ENCODE measurements at regions of chr2 and their contacts with region 1.

Region 1: DNA sequence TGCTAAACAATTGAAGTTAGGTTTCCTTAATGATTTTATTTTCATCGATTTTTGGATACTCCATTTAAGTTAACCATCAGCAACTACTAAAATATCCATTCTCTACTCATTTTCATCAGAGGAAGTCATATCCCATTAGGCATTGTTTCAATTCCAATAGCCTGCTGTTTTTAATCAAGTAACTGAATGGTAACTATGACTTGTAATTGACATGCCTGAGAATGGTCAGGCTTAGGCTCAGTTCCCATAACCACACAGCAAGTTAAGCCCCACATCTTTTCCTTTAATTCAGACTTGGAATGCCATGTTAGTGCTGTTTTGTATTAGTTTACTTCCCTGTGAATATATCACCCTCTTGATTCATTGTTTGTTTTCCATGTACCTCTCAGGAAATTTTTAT is 398.8 kb downstream of the ARHGAP15 start:
- DNase-seq: no peak
- ATAC-seq: no peak
- H3K4me3 ChIP-seq: no peak overlapping the region
- H3K4me3 Mint-ChIP-seq: no peak overlapping the region
- H3K27ac ChIP-seq: no peak overlapping the region
- H3K27ac Mint-ChIP-seq: peak overlapping the region in 3 of 9 donors; percentile 5 to 32 (median 16)
- H3K4me1 ChIP-seq: peaks cover 0 to 25% of the 10 kb centered on the region in 2 donors
- H3K4me1 Mint-ChIP-seq: peaks cover 19 to 60% (median 41%) of the 10 kb centered on the region in 7 donors
- H3K27me3 ChIP-seq: no peaks in the 10 kb centered on the region
- H3K27me3 Mint-ChIP-seq: no peaks in the 10 kb centered on the region

Region 2: DNA sequence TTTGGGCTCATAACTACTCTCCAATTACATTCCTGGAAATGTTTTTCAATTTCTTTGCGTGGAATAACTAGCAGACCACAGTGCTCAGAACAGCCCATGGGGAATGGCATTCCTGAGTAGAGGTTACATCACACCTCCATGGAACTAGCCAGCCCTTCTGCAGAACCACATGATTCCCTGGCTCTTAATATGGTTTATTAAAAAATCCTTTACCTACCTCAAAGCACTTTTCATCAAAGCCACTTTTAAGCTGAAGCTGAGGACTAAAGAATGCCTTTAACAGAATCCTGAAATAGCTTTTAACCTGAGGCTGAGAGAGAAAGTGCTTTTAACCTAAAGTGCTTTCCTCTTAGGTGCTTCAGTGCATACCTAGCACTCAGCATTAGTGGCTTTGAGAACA is 22.5 kb before region 1 on chr2:
- CTCF ChIA-PET with region 1: no interaction called
- POLR2A ChIA-PET with region 1: no interaction called
- intact Hi-C with region 1: no loop called
- DNase-seq: no peak
- ATAC-seq: no peak
- H3K4me3 ChIP-seq: no peak overlapping the region
- H3K4me3 Mint-ChIP-seq: no peak overlapping the region
- H3K27ac ChIP-seq: no peak overlapping the region
- H3K27ac Mint-ChIP-seq: no peak overlapping the region
- H3K4me1 ChIP-seq: no peaks in the 10 kb centered on the region
- H3K4me1 Mint-ChIP-seq: peaks cover 6 to 41% (median 28%) of the 10 kb centered on the region in 7 donors
- H3K27me3 ChIP-seq: no peaks in the 10 kb centered on the region
- H3K27me3 Mint-ChIP-seq: no peaks in the 10 kb centered on the region

Region 3: DNA sequence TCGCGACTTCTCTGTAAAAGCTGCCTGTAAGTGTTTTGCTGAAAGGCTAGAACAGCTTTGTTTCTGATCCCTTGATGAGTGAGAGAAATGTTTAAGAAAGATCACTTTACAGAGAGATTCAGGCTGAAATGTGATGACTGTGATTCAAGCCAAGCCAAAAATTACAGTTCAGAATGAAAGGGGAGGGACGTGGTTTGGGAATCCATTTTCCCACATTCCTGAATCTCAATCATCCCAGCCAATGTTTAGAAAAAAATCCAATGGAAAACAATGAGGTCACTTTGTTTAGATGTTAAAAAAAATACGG is 17.9 kb after region 1 on chr2:
- CTCF ChIA-PET with region 1: no interaction called
- POLR2A ChIA-PET with region 1: no interaction called
- intact Hi-C with region 1: loop called in 1 of 2 experiments (anchors 2 kb)
- DNase-seq: no peak
- ATAC-seq: no peak
- H3K4me3 ChIP-seq: no peak overlapping the region
- H3K4me3 Mint-ChIP-seq: no peak overlapping the region
- H3K27ac ChIP-seq: no peak overlapping the region
- H3K27ac Mint-ChIP-seq: peak overlapping the region in 2 of 9 donors; percentile 49 to 53
- H3K4me1 ChIP-seq: peaks cover 6 to 7% of the 10 kb centered on the region in 2 donors
- H3K4me1 Mint-ChIP-seq: peaks cover 25 to 57% (median 49%) of the 10 kb centered on the region in 7 donors
- H3K27me3 ChIP-seq: no peaks in the 10 kb centered on the region
- H3K27me3 Mint-ChIP-seq: no peaks in the 10 kb centered on the region

Region 4: GRCh38 chr2:144256996-144257707 is 729.1 kb after region 1 on chr2:
- CTCF ChIA-PET with region 1: no interaction called
- POLR2A ChIA-PET with region 1: no interaction called
- intact Hi-C with region 1: no loop called
- DNase-seq: no peak
- ATAC-seq: no peak
- H3K4me3 ChIP-seq: no peak overlapping the region
- H3K4me3 Mint-ChIP-seq: no peak overlapping the region
- H3K27ac ChIP-seq: no peak overlapping the region
- H3K27ac Mint-ChIP-seq: no peak overlapping the region
- H3K4me1 ChIP-seq: peaks cover 0 to 21% of the 10 kb centered on the region in 2 donors
- H3K4me1 Mint-ChIP-seq: peaks cover 10 to 36% (median 13%) of the 10 kb centered on the region in 7 donors
- H3K27me3 ChIP-seq: no peaks in the 10 kb centered on the region
- H3K27me3 Mint-ChIP-seq: no peaks in the 10 kb centered on the region

Measured in naive thymus-derived CD4-positive, alpha-beta T cell (primary cell).